ENCODE measurements at regions of chr2 and their contacts with region 1.

Region 1: DNA sequence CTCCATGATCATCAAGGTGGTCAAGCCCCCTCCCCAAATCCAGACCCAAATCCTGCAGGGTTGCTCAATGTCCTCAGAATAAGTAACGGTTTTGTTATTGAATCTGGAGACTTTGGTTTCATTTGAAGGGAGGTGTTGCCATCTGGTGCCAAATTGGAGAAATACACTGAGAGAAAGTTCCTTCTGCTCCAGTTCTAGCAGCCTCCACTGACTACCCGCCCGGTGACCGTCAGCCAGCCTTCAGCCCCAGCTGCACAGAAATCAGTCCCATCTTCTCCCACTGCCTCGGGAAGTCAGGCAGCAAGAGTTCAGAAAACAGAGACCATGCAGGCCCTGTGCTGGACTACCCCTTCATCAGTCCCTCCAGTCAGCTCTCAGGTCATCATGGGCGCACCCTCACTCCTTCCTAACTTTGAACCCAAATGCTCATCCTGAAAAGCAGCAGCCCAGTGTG is 38.7 kb downstream of the PKDCC start:
- DNase-seq: peak; percentile 72
- H3K4me3 Mint-ChIP-seq: no peak overlapping the region
- H3K27ac Mint-ChIP-seq: no peak overlapping the region
- H3K4me1 Mint-ChIP-seq: no peaks in the 10 kb centered on the region
- H3K27me3 Mint-ChIP-seq: peaks cover 16% of the 10 kb centered on the region
- CTCF ChIP-seq: peak; percentile 88

Region 2: DNA sequence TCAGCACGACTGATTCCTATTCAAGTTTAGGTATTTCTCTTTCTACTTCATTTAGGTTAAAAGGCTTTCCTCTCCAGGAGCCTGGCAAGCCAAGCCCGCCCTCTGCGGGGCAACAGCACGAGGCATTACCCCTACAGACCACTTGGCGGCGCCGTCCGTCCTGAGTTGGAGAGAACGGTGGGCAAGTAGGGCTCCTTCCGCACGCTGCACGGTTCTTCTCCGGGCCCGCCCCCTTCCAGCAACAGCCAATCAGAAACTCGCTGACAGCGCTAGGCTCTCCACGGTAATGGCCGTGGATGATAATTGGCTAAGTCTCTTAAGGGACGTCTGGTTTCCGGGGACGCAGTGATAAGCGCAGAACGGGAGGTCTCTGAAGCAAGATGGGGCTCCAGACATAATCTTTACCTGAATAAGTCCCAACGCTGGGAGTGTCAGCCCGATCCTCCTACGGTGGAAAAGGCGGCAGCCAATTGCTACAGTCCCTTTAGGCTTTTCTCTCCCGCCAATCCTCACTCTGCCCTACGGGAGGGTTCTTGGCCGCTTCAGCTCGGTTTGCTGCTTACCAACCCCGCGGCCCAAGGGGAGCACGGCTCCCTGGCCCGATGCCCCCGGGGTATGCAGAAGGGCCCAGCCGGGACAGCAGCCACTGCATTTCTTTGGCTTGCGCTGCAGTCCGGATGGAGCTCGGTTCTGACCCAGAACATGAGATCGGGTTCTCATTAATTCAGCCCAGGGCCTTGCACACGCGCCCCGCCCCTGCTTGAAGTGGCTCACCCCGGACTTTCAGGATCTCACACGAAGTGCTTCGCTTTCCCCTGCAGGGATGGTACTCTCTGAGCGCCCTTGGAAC is 245.6 kb before region 1 on chr2:
- CTCF ChIA-PET with region 1: interaction called, 382 read pairs
- POLR2A ChIA-PET with region 1: interaction called, 4 read pairs
- intact Hi-C with region 1: no loop called
- DNase-seq: peak; percentile 94
- H3K4me3 Mint-ChIP-seq: peak overlapping the region; percentile 89
- H3K27ac Mint-ChIP-seq: peak overlapping the region; percentile 76
- H3K4me1 Mint-ChIP-seq: peaks cover 10% of the 10 kb centered on the region
- H3K27me3 Mint-ChIP-seq: peaks cover 39% of the 10 kb centered on the region
- CTCF ChIP-seq: peak; percentile 96

Region 3: DNA sequence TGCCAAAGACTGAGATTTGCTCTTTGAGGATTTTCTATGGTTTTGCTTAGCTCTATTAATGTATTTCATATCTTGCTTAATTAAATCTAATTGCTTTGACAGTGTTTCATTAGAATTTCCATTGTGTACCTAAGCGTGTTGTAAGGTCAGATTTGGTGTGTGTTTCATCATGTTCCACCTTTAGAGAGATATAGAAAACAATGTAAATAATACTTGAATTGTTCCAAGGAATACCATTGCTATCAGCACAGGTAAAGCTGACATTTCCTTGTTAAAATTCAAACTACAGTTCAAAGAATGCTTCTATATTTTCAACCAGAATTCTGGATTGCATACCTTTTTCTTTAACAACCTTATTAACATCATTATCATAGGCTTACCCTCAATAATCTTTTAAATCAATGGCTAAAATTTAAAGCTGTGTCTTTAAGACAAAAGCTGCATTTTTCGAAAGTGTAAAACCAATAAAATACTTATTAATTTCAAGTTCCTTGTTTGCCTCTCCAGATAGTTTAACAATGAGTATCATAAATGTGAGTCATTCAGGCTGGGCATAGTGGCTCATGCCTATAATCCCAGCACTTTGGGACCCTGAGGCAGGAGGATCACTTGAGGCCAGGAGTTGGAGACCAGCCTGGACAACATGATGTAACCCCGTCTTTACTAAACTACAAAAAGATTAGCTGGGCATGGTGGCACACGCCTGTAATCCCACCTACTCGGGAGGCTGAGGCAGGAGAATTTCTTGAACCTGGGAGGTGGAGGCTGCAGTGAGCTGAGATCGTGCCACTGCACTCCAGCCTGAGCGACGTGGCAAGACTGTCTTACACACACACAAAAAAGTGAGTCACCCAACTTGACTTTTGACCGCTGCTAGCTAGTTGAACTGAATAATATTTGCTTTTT is 226.7 kb before region 1 on chr2:
- CTCF ChIA-PET with region 1: interaction called, 382 read pairs
- POLR2A ChIA-PET with region 1: interaction called, 3 read pairs
- intact Hi-C with region 1: no loop called
- DNase-seq: peak; percentile 66
- H3K4me3 Mint-ChIP-seq: no peak overlapping the region
- H3K27ac Mint-ChIP-seq: peak overlapping the region; percentile 78
- H3K4me1 Mint-ChIP-seq: peaks cover 14% of the 10 kb centered on the region
- H3K27me3 Mint-ChIP-seq: no peaks in the 10 kb centered on the region
- CTCF ChIP-seq: no peak

Region 4: DNA sequence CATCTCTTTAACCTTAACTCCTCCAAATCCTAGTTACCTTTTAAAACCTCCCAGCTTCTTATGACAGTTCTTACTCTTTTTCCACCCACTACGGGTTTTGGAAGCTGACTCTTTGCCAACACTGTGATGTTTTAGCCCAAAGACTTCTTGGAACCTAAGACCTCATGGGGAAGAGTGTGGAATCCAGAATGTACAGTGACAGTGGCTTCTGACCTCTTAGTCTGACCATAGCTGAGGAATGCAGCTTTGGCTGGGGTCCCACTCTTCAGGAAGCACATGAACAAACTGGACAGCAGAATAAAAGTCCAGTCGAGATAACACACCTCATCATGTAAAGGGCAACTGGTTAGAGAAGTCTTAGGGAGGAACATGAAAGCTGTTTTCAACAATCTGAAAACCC is 199.8 kb before region 1 on chr2:
- CTCF ChIA-PET with region 1: interaction called, 612 read pairs
- POLR2A ChIA-PET with region 1: interaction called, 3 read pairs
- intact Hi-C with region 1: no loop called
- DNase-seq: no peak
- H3K4me3 Mint-ChIP-seq: no peak overlapping the region
- H3K27ac Mint-ChIP-seq: no peak overlapping the region
- H3K4me1 Mint-ChIP-seq: no peaks in the 10 kb centered on the region
- H3K27me3 Mint-ChIP-seq: no peaks in the 10 kb centered on the region
- CTCF ChIP-seq: no peak

Region 5: GRCh38 chr2:41906338-41906725 is 180.2 kb before region 1 on chr2:
- CTCF ChIA-PET with region 1: interaction called, 13 read pairs
- POLR2A ChIA-PET with region 1: no interaction called
- intact Hi-C with region 1: no loop called
- DNase-seq: no peak
- H3K4me3 Mint-ChIP-seq: no peak overlapping the region
- H3K27ac Mint-ChIP-seq: no peak overlapping the region
- H3K4me1 Mint-ChIP-seq: peaks cover 11% of the 10 kb centered on the region
- H3K27me3 Mint-ChIP-seq: no peaks in the 10 kb centered on the region
- CTCF ChIP-seq: no peak

Region 6: GRCh38 chr2:41958775-41959174 is 127.8 kb before region 1 on chr2:
- CTCF ChIA-PET with region 1: no interaction called
- POLR2A ChIA-PET with region 1: no interaction called
- intact Hi-C with region 1: no loop called
- DNase-seq: no peak
- H3K4me3 Mint-ChIP-seq: no peak overlapping the region
- H3K27ac Mint-ChIP-seq: no peak overlapping the region
- H3K4me1 Mint-ChIP-seq: no peaks in the 10 kb centered on the region
- H3K27me3 Mint-ChIP-seq: peaks cover 42% of the 10 kb centered on the region
- CTCF ChIP-seq: no peak

Region 7: GRCh38 chr2:42072349-42073118 is 14.0 kb before region 1 on chr2:
- CTCF ChIA-PET with region 1: interaction called, 51 read pairs
- POLR2A ChIA-PET with region 1: no interaction called
- intact Hi-C with region 1: no loop called
- DNase-seq: peak; percentile 54
- H3K4me3 Mint-ChIP-seq: no peak overlapping the region
- H3K27ac Mint-ChIP-seq: no peak overlapping the region
- H3K4me1 Mint-ChIP-seq: peaks cover 12% of the 10 kb centered on the region
- H3K27me3 Mint-ChIP-seq: peaks cover 49% of the 10 kb centered on the region
- CTCF ChIP-seq: no peak

Region 8: GRCh38 chr2:42216712-42217111 is 130.2 kb after region 1 on chr2:
- CTCF ChIA-PET with region 1: no interaction called
- POLR2A ChIA-PET with region 1: no interaction called
- intact Hi-C with region 1: no loop called
- DNase-seq: peak; percentile 59
- H3K4me3 Mint-ChIP-seq: no peak overlapping the region
- H3K27ac Mint-ChIP-seq: peak overlapping the region; percentile 42
- H3K4me1 Mint-ChIP-seq: no peaks in the 10 kb centered on the region
- H3K27me3 Mint-ChIP-seq: no peaks in the 10 kb centered on the region
- CTCF ChIP-seq: no peak

Region 9: DNA sequence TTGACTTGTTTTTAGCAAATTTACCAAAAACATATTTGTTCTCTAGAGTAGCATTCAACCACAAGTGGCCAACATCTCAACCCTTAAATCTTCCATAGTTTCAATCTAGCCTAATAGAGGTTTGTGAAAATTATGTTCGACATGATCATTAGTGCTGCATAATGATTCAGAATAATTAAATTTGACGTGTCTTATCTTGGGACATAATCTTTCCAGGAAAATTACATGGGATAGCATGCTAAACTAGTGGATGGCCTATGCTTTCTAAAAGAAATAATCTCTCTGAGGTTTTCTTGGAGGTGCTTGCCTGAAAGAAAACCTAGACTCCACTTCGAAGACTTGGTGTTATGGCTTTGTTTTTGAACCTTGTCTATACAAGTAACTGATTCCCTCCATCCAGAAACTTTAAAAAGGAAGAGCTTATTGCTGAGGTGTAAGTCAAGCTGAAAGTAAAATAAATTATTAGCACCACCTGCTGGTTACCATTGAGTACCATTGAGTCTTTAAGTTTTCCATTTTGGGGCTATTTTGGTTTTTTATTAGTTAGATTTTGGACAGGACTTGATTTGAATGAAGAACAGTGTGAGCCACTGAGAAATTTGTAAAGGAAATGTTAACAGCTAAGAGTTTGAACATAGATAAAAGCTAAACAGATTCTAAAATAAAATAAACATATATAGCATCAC is 241.8 kb after region 1 on chr2:
- CTCF ChIA-PET with region 1: interaction called, 17 read pairs
- POLR2A ChIA-PET with region 1: interaction called, 5 read pairs
- intact Hi-C with region 1: no loop called
- DNase-seq: peak; percentile 36
- H3K4me3 Mint-ChIP-seq: no peak overlapping the region
- H3K27ac Mint-ChIP-seq: no peak overlapping the region
- H3K4me1 Mint-ChIP-seq: peaks cover 10% of the 10 kb centered on the region
- H3K27me3 Mint-ChIP-seq: no peaks in the 10 kb centered on the region
- CTCF ChIP-seq: peak; percentile 37

Region 10: GRCh38 chr2:42494355-42495233 is 408.1 kb after region 1 on chr2:
- CTCF ChIA-PET with region 1: no interaction called
- POLR2A ChIA-PET with region 1: no interaction called
- intact Hi-C with region 1: no loop called
- DNase-seq: peak; percentile 76
- H3K4me3 Mint-ChIP-seq: peak overlapping the region; percentile 77
- H3K27ac Mint-ChIP-seq: no peak overlapping the region
- H3K4me1 Mint-ChIP-seq: no peaks in the 10 kb centered on the region
- H3K27me3 Mint-ChIP-seq: no peaks in the 10 kb centered on the region
- CTCF ChIP-seq: peak; percentile 81

Measured in MCF 10A (cell line).